GM10248 (cell line): ENCODE measurements at regions of chr18 and their contacts with region 1.

Region 1: DNA sequence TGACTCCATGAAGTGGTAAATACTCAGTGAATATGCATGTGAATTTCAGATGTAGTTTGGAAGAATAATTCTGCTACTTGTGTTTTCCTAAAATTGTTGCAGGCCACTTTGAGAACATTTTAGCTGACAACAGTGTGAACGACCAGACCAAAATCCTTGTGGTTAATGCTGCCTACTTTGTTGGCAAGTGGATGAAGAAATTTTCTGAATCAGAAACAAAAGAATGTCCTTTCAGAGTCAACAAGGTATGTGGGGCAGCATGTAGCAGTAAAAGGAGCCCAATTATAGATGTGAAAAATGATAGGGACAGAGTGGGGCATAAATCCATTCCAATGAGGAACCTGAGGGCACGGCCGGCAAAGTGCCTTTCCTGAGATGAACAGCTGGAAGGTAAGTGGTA is 16.1 kb downstream of the SERPINB5 start:
- DNase-seq: no peak
- CTCF ChIP-seq: no peak

Region 2: DNA sequence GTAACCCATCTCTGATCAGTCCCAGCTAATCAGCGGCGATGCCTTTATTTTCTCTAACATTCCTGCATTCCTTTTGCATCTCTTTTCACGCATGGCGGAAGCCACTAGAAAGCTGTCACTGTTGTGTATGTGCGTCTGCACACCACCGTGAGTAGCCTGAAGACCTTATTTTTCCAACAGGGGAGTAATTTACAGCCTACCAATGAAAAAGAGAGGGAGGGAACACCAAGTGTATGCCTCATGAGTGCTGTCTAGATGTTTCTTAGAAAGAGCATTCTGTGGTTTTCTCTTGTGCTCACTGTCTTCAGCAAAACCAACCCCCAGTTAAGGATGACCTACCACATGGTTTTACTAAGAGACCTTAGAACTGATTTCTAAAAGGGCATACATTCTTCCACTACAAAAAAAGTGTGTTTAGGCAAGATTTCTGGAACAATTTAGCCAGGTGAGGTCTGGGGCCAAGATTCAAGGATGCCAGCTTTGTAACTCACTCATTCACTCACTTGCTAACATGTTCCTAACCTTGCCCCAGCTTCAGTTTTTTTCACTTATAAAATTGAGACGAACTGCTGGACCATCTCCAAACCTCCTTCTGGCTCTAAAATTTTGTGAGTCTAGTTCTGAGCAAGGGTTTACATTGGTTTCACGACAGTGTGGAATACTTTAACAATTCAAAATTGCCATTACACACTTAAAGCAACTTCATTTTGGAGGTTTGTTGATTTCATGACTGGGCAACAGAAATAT is 224.7 kb before region 1 on chr18:
- CTCF ChIA-PET with region 1: no interaction called
- POLR2A ChIA-PET with region 1: no interaction called
- DNase-seq: no peak
- CTCF ChIP-seq: no peak

Region 3: DNA sequence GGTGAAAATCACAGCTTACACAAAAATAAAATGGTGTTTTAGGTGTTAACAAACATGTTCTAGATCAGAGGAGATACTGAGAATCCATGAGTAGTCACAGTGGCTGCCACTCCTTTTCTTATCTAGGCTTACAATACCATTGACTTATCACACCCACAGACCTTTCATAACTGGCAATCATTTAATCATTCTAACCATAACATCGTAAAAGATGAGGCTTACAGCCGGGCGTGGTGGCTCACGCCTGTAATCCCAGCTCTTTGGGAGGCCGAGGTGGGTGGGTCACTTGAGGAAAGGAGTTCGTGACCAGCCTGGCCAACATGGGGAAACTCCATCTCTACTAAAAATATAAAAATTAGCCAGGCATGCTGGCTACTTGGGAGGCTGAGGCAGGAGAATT is 34.9 kb before region 1 on chr18:
- CTCF ChIA-PET with region 1: no interaction called
- POLR2A ChIA-PET with region 1: no interaction called
- DNase-seq: no peak
- CTCF ChIP-seq: no peak

Region 4: DNA sequence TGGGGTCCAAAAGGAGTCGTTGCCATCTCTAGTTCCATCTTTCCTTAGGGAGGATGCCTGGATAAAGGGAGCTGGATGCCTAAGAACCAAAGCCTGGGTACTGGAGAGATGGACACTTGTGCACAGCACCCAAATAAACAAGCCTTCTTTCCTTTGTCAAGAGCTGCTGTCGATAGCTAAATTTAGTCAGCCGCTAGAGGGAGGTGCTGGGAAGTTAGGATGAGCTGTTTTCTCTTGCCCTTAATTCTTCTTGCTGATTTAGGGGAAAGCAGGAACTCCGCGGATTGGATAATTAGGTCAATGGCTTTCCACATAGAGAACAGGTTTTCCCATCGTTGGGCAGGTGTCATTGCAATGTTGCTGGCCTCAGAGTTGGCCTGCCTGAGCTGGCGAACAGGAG is 18.4 kb after region 1 on chr18:
- CTCF ChIA-PET with region 1: interaction called, 10 read pairs
- POLR2A ChIA-PET with region 1: no interaction called
- DNase-seq: no peak
- CTCF ChIP-seq: peak; percentile 57